ENCODE measurements at regions of chr11 and their contacts with region 1.

Region 1: DNA sequence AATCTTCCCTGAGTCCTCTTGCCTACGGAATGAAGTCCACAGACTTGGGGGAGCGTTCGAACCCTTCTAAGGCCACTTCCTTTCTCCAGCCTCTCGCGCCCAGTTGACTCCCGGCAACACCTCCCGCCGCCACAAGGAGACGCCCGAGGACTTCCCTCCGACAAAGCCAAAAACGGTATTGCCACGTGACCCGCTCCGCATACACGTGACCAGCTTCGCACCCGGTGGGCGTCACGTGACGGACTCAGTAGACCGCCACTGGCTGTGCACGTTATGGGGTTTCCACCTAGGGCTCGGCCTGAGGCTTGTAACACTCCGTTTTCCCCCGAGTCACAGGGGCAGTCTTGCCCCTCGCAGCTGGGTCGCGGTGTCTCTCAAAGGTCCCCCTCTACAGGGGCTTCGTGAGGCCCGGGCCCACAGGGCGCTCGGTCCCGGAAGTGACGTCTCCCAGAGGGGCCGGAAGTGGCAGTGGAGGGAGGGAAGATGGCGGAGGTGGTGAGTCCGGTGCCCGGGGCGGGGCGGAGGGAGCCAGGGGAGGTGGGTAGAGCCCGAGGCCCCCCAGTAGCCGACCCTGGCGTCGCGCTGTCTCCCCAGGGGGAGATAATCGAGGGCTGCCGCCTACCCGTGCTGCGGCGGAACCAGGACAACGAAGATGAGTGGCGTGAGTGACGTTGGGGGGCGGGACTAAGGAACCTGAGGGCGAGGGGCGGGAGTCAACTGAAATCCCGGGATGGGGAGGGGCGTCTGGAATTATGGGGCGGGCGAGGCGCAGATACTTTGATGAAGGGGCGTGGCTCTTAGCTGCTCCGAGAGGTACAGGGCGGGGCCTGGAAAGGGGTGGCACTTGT is at the start of gene KAT5:
- DNase-seq: peak; percentile 100
- ATAC-seq: peak; percentile 87
- H3K4me3 Mint-ChIP-seq: peak within 1 kb of the TSS; percentile 83
- H3K27ac Mint-ChIP-seq: peak within 1 kb of the TSS; percentile 98
- H3K4me1 Mint-ChIP-seq: peaks cover 36% of the 10 kb centered on the region
- H3K27me3 Mint-ChIP-seq: peaks cover 2% of the 10 kb centered on the region
- total RNA-seq, gene KAT5: 62.0 to 69.8 TPM

Region 2: DNA sequence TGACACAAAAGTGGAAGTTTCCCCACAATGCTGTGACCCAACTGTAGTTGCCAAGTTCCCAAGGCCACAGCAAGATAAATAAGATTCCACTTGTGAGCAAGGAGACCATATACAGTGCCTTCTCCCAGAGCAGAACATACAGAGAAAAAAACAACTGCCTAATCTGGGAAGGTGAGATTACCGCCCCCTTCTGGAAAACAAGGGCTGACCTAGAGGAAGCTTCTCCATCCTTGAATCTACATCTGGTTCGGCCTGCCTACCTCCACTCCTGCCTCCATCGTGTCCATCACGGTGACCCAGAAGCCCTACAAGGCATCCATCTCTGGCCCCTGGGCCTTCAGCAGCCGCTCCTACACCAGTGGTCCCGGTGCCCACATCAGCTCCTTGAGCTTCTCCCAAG is 14.7 kb after region 1 on chr11:
- CTCF ChIA-PET with region 1: interaction called, 37 read pairs
- DNase-seq: no peak
- ATAC-seq: no peak
- H3K4me3 Mint-ChIP-seq: no peak overlapping the region
- H3K27ac Mint-ChIP-seq: no peak overlapping the region
- H3K4me1 Mint-ChIP-seq: peaks cover 5% of the 10 kb centered on the region
- H3K27me3 Mint-ChIP-seq: peaks cover 6% of the 10 kb centered on the region

Region 3: GRCh38 chr11:65779851-65780577 is 68.0 kb after region 1 on chr11:
- CTCF ChIA-PET with region 1: interaction called, 49 read pairs
- DNase-seq: peak; percentile 91
- ATAC-seq: peak; percentile 81
- H3K4me3 Mint-ChIP-seq: peak overlapping the region; percentile 87
- H3K27ac Mint-ChIP-seq: peak overlapping the region; percentile 82
- H3K4me1 Mint-ChIP-seq: peaks cover 16% of the 10 kb centered on the region
- H3K27me3 Mint-ChIP-seq: peaks cover 14% of the 10 kb centered on the region

Region 4: GRCh38 chr11:65791691-65792213 is 79.7 kb after region 1 on chr11:
- CTCF ChIA-PET with region 1: interaction called, 13 read pairs
- DNase-seq: peak; percentile 85
- ATAC-seq: peak; percentile 95
- H3K4me3 Mint-ChIP-seq: no peak overlapping the region
- H3K27ac Mint-ChIP-seq: peak overlapping the region; percentile 73
- H3K4me1 Mint-ChIP-seq: peaks cover 22% of the 10 kb centered on the region
- H3K27me3 Mint-ChIP-seq: peaks cover 34% of the 10 kb centered on the region

Region 5: GRCh38 chr11:65826962-65827735 is 115.1 kb after region 1 on chr11:
- CTCF ChIA-PET with region 1: interaction called, 12 read pairs
- DNase-seq: no peak
- ATAC-seq: no peak
- H3K4me3 Mint-ChIP-seq: no peak overlapping the region
- H3K27ac Mint-ChIP-seq: no peak overlapping the region
- H3K4me1 Mint-ChIP-seq: peaks cover 17% of the 10 kb centered on the region
- H3K27me3 Mint-ChIP-seq: peaks cover 19% of the 10 kb centered on the region

Region 6: GRCh38 chr11:65859200-65859811 is 147.3 kb after region 1 on chr11:
- CTCF ChIA-PET with region 1: interaction called, 21 read pairs
- DNase-seq: peak; percentile 100
- ATAC-seq: peak; percentile 71
- H3K4me3 Mint-ChIP-seq: peak overlapping the region; percentile 91
- H3K27ac Mint-ChIP-seq: peak overlapping the region; percentile 99
- H3K4me1 Mint-ChIP-seq: peaks cover 50% of the 10 kb centered on the region
- H3K27me3 Mint-ChIP-seq: no peaks in the 10 kb centered on the region

Region 7: GRCh38 chr11:66015454-66015881 is 303.5 kb after region 1 on chr11:
- CTCF ChIA-PET with region 1: no interaction called
- DNase-seq: no peak
- ATAC-seq: no peak
- H3K4me3 Mint-ChIP-seq: no peak overlapping the region
- H3K27ac Mint-ChIP-seq: no peak overlapping the region
- H3K4me1 Mint-ChIP-seq: peaks cover 6% of the 10 kb centered on the region
- H3K27me3 Mint-ChIP-seq: peaks cover 29% of the 10 kb centered on the region

Region 8: GRCh38 chr11:66045177-66045639 is 333.2 kb after region 1 on chr11:
- CTCF ChIA-PET with region 1: interaction called, 14 read pairs
- DNase-seq: peak; percentile 86
- ATAC-seq: peak; percentile 96
- H3K4me3 Mint-ChIP-seq: no peak overlapping the region
- H3K27ac Mint-ChIP-seq: no peak overlapping the region
- H3K4me1 Mint-ChIP-seq: peaks cover 17% of the 10 kb centered on the region
- H3K27me3 Mint-ChIP-seq: peaks cover 2% of the 10 kb centered on the region

Measured in activated CD8-positive, alpha-beta memory T cell treated with anti-CD3 and anti-CD28 coated beads, Interleukin-2, amount 10 ng/mL, durations not matched to agents 7 days and 5 days (primary cell).